ENCODE measurements at regions of chr6 and their contacts with region 1.

Region 1: GRCh38 chr6:36333931-36334725 is 2.6 kb downstream of the BNIP5 start:
- DNase-seq: no peak
- ATAC-seq: peak; percentile 31
- H3K4me3 ChIP-seq: 0 out of 6 replicates have a peak overlapping the region, but pooled peaks of 1 of the 3 experiments have one; percentile 53
- H3K27ac ChIP-seq: no peak overlapping the region
- H3K4me1 ChIP-seq: peaks cover 30% of the 10 kb centered on the region
- H3K27me3 ChIP-seq: peaks cover 5 to 46% of the 10 kb centered on the region in 2 experiments
- CTCF ChIP-seq: no peak
- EP300 ChIP-seq: no peak
- POLR2A ChIP-seq: no peak
- RAD21 ChIP-seq: no peak

Region 2: DNA sequence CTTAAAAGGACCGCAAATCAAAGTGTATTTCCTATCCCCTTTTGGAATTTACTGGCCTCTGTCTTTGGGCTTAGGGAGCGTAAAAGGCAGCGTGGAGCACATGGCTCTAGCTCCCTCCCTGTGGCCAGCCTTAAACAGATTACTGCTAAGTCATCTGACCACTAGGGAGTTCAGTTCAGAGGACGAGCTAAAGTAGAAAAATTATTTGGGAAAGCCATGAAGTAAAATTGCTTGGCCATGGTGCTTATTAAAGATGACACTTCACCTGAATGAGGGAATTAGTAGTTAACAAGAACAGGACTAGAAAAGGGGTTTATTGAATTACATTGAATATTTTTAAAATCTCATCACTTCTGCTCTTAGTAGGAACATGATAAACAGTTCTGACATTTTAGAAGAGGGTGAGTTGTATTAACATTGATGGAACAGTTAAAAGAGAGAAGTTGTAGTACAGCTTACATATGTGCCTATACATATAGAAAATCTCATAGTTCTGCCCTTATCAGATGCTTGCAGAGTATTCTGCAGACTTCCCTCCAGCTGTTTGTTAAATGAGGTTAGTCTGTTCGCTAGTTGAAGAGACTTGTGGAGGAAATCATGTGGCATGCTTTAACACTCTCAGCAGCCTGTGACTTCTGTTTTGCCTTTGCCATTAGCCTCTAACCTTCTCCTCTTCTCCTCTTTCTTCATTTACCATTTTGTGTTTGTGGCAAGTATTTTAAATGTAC is 235.0 kb before region 1 on chr6:
- CTCF ChIA-PET with region 1: no interaction called
- POLR2A ChIA-PET with region 1: no interaction called
- in situ Hi-C with region 1: no loop called
- intact Hi-C with region 1: no loop called
- DNase-seq: no peak
- ATAC-seq: no peak
- H3K4me3 ChIP-seq: no peak overlapping the region
- H3K27ac ChIP-seq: no peak overlapping the region
- H3K4me1 ChIP-seq: peaks cover 38% of the 10 kb centered on the region
- H3K27me3 ChIP-seq: no peaks in the 10 kb centered on the region
- CTCF ChIP-seq: no peak
- EP300 ChIP-seq: no peak
- POLR2A ChIP-seq: no peak
- RAD21 ChIP-seq: no peak

Region 3: DNA sequence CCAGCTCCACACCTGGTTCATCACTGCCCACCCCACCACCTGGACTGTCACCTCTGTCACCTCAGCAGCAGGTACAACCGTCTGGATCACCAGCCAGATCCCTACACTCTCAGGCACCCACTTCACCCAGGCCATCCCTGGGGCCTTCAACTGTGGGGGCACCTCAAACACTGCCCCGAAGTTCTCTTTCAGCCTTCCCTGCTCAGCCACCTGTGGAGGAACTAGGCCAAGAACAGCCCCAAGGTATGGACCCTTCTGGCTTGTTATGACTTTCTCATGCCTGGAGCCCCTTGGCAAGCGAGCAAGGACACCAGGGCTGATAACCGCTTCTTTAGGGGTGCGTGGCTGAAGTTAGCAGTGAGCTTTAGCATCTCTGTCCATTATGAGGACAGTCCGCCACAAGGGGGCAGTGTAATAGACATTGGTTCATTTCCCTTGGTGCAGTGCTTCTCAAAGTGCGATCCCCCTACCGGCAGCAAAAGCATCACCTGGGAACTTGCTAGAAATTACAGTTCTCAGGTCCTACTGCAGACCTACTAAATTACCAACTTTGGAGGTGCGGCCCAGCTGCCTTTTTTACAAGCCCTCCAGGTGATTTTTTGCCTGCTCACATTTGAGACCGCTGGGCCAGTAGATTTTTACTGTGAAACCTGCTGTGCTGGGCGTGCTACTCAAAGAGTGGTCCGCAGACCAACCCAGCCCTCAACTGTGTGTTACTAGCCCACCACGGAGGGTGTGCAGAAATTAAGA is 31.7 kb before region 1 on chr6:
- CTCF ChIA-PET with region 1: interaction called, 3 read pairs
- POLR2A ChIA-PET with region 1: no interaction called
- in situ Hi-C with region 1: no loop called
- intact Hi-C with region 1: loop called (anchors 2 kb)
- DNase-seq: peak; percentile 93
- ATAC-seq: peak; percentile 96
- H3K4me3 ChIP-seq: no peak overlapping the region
- H3K27ac ChIP-seq: no peak overlapping the region
- H3K4me1 ChIP-seq: no peaks in the 10 kb centered on the region
- H3K27me3 ChIP-seq: peaks cover 0 to 10% of the 10 kb centered on the region in 2 experiments; a peak in 2 of 5 replicates
- CTCF ChIP-seq: peak; percentile 96
- EP300 ChIP-seq: no peak
- POLR2A ChIP-seq: no peak
- RAD21 ChIP-seq: peak; percentile 92